Sigmoid colon (tissue), 7 donors: ENCODE measurements at regions of chr20 and their contacts with region 1.

Region 1: GRCh38 chr20:37990571-37991151 is 42.6 kb downstream of the TTI1 start:
- DNase-seq: no peak
- H3K4me3 ChIP-seq: no peak overlapping the region
- H3K27ac ChIP-seq: peak overlapping the region in 1 of 4 donors; percentile 63
- H3K4me1 ChIP-seq: peaks cover 0 to 40% (median 31%) of the 10 kb centered on the region in 4 donors
- H3K27me3 ChIP-seq: no peaks in the 10 kb centered on the region
- CTCF ChIP-seq: no peak
- EP300 ChIP-seq: no peak
- POLR2A ChIP-seq: no peak

Region 2: DNA sequence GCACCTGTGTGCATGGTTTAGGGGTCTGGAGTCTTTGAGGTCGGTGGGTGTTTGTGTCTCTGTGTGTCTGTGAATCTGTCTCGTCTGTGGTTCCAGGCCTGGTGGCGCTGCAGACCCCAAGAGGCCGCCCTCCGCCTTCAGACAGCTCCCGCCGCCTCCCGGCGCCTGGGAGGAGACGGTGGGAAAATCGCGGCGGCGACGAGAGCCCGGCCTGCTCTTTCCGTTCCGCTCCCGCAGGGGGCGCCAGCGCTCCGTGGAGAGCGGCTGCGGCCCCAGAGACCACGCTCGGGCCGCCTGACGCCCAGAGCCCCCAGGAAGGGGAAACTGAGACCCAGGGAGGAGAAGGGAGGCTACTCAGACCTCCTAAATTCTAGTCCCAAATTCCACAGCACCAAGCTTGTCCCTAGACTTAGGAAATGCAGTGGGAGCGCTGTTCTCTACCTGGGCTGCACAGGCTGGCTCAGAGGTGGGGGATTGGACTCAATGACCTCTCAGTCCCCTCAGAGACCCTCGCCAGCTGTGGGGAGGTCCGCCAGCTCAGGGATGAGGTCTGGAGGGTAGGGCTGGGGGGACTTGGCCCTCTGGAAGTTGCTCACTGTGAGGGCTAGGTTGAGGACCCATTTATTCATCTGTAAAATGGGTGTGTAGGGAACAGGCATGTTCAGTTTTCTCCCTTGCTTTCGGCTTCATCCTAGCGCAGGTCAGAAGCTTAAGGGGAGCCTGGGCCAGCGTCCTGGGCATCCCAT is 426.1 kb before region 1 on chr20:
- intact Hi-C with region 1: loop called (anchors 2 kb)
- DNase-seq: no peak
- H3K4me3 ChIP-seq: no peak overlapping the region
- H3K27ac ChIP-seq: no peak overlapping the region
- H3K4me1 ChIP-seq: peaks cover 0 to 6% (median 0%) of the 10 kb centered on the region in 4 donors
- H3K27me3 ChIP-seq: peaks cover 0 to 73% (median 32%) of the 10 kb centered on the region in 3 donors
- CTCF ChIP-seq: peak; percentile 56 to 85 (median 73)
- EP300 ChIP-seq: no peak
- POLR2A ChIP-seq: no peak

Region 3: GRCh38 chr20:37693635-37694626 is 296.7 kb before region 1 on chr20 and contains the start of gene CTNNBL1:
- intact Hi-C with region 1: loop called (anchors 5 kb)
- DNase-seq: peak; percentile 98
- H3K4me3 ChIP-seq: peak within 1 kb of the TSS; percentile 64 to 92 (median 74)
- H3K27ac ChIP-seq: peak within 1 kb of the TSS; percentile 41 to 77 (median 73)
- H3K4me1 ChIP-seq: peaks cover 0 to 30% (median 18%) of the 10 kb centered on the region in 4 donors
- H3K27me3 ChIP-seq: peaks cover 0 to 4% (median 0%) of the 10 kb centered on the region in 3 donors
- CTCF ChIP-seq: no peak
- EP300 ChIP-seq: peak in 1 of 4 donors; percentile 35
- POLR2A ChIP-seq: peak; percentile 46 to 65
- total RNA-seq, gene CTNNBL1: 33.0 to 47.9 (median 42.5) TPM

Region 4: GRCh38 chr20:37758332-37758731 is 232.3 kb before region 1 on chr20:
- intact Hi-C with region 1: loop called (anchors 5 kb)
- DNase-seq: no peak
- H3K4me3 ChIP-seq: no peak overlapping the region
- H3K27ac ChIP-seq: no peak overlapping the region
- H3K4me1 ChIP-seq: no peaks in the 10 kb centered on the region
- H3K27me3 ChIP-seq: no peaks in the 10 kb centered on the region
- CTCF ChIP-seq: no peak
- EP300 ChIP-seq: no peak
- POLR2A ChIP-seq: no peak

Region 5: DNA sequence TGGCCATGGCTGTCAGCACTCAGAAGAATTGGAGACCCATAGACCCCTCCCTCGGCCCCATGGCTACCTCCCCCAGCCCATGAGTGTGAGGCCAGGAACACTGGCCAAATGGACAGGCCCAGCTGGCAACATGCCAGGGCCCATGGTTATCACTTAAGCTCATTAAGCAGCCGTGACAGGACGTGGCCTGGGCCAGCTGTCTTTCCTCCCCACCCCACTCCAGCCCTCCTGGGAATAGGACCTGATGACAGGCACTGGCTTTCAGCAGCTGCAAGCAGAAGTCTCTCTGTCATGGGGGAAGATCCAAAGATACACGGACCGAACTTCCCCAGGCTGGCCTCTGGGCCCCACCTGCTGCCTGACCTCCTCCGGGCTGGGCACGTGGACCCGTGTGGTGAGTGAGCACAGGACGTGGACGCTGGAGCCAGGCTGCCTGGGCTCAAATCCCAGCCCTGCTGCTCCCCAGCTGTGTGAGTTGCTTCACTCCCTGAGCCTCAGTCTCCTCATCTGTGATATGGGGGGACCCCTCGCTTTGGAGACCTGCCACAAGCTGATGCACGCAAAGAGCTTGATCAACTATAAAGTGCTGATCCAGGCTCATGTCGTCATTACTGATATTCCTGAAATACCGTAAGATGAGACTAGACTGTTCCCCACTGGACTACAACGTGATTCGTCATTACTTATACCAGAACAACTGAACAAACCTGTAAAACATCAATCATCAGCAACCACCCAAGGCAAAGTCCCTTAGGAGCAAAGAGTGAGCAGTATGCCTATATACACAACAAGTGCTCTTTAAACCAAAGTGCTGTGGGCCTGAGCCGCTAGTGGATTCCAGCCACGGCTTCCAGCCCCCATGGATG is 109.7 kb before region 1 on chr20:
- intact Hi-C with region 1: no loop called
- DNase-seq: peak; percentile 75
- H3K4me3 ChIP-seq: no peak overlapping the region
- H3K27ac ChIP-seq: no peak overlapping the region
- H3K4me1 ChIP-seq: peaks cover 0 to 8% (median 4%) of the 10 kb centered on the region in 4 donors
- H3K27me3 ChIP-seq: no peaks in the 10 kb centered on the region
- CTCF ChIP-seq: no peak
- EP300 ChIP-seq: no peak
- POLR2A ChIP-seq: no peak

Region 6: GRCh38 chr20:37901654-37902503 is 88.8 kb before region 1 on chr20:
- intact Hi-C with region 1: loop called (anchors 5 kb)
- DNase-seq: no peak
- H3K4me3 ChIP-seq: peak overlapping the region in 1 of 4 donors; percentile 52
- H3K27ac ChIP-seq: no peak overlapping the region
- H3K4me1 ChIP-seq: peaks cover 0 to 42% (median 35%) of the 10 kb centered on the region in 4 donors
- H3K27me3 ChIP-seq: peaks cover 9 to 49% (median 13%) of the 10 kb centered on the region in 3 donors
- CTCF ChIP-seq: peak in 2 of 4 experiments; percentile 16 to 18
- EP300 ChIP-seq: no peak
- POLR2A ChIP-seq: no peak

Region 7: GRCh38 chr20:37941332-37941731 is 49.3 kb before region 1 on chr20:
- intact Hi-C with region 1: no loop called
- DNase-seq: no peak
- H3K4me3 ChIP-seq: no peak overlapping the region
- H3K27ac ChIP-seq: no peak overlapping the region
- H3K4me1 ChIP-seq: no peaks in the 10 kb centered on the region
- H3K27me3 ChIP-seq: peaks cover 0 to 11% (median 0%) of the 10 kb centered on the region in 3 donors
- CTCF ChIP-seq: no peak
- EP300 ChIP-seq: no peak
- POLR2A ChIP-seq: no peak

Region 8: DNA sequence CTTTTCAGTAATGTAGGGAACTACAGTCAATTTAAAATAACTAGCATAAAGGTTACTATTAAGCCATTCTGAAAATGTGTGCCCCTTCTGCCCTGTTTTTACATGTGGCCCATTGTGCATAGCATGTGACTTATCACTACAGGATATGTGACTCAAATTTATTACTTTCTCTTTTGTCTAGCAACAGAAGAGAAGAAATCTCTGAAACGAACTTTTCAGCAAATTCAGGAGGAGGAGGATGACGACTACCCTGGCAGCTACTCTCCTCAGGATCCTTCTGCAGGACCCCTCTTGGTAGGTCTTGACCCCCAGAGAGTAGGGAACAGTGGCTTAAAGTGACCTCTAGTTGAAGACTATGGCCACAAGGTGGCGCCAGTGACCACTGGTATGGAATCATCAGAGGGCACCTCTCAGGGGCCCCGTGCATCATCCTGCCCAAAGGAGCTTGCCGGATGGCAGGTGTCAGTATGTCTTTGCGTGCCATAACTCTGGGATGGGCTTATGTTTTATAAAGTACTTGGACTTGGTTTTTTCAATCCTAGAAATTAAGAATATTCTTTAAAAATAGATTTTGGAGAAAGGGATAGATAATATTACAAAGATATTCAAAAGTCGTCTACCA is 66.8 kb after region 1 on chr20:
- intact Hi-C with region 1: no loop called
- DNase-seq: peak; percentile 89
- H3K4me3 ChIP-seq: no peak overlapping the region
- H3K27ac ChIP-seq: no peak overlapping the region
- H3K4me1 ChIP-seq: no peaks in the 10 kb centered on the region
- H3K27me3 ChIP-seq: no peaks in the 10 kb centered on the region
- CTCF ChIP-seq: peak; percentile 66 to 94 (median 87)
- EP300 ChIP-seq: no peak
- POLR2A ChIP-seq: no peak